ENCODE measurements at regions of chr12 and their contacts with region 1.

Region 1: GRCh38 chr12:120580787-120581723 is at the start of gene POP5:
- DNase-seq: peak; percentile 96 to 97
- H3K4me3 ChIP-seq: peak within 1 kb of the TSS; percentile 86
- H3K4me3 Mint-ChIP-seq: peak within 1 kb of the TSS; percentile 99
- H3K27ac Mint-ChIP-seq: peak within 1 kb of the TSS; percentile 96
- H3K4me1 ChIP-seq: no peaks in the 10 kb centered on the region
- H3K4me1 Mint-ChIP-seq: peaks cover 15% of the 10 kb centered on the region
- H3K27me3 ChIP-seq: no peaks in the 10 kb centered on the region
- H3K27me3 Mint-ChIP-seq: no peaks in the 10 kb centered on the region
- CTCF ChIP-seq: no peak
- total RNA-seq, gene POP5: 49.5 and 53.9 TPM in 2 replicates

Region 2: GRCh38 chr12:120421701-120422100 is 159.4 kb before region 1 on chr12:
- CTCF ChIA-PET with region 1: no interaction called
- POLR2A ChIA-PET with region 1: no interaction called
- intact Hi-C with region 1: no loop called
- DNase-seq: no peak
- H3K4me3 ChIP-seq: no peak overlapping the region
- H3K4me3 Mint-ChIP-seq: no peak overlapping the region
- H3K27ac Mint-ChIP-seq: no peak overlapping the region
- H3K4me1 ChIP-seq: no peaks in the 10 kb centered on the region
- H3K4me1 Mint-ChIP-seq: peaks cover 7% of the 10 kb centered on the region
- H3K27me3 ChIP-seq: no peaks in the 10 kb centered on the region
- H3K27me3 Mint-ChIP-seq: no peaks in the 10 kb centered on the region
- CTCF ChIP-seq: no peak

Region 3: GRCh38 chr12:120495723-120496412 is 85.2 kb before region 1 on chr12 and contains the start of gene DYNLL1:
- CTCF ChIA-PET with region 1: interaction called, 3 read pairs
- POLR2A ChIA-PET with region 1: interaction called, 17 read pairs
- intact Hi-C with region 1: no loop called
- DNase-seq: peak; percentile 96 to 98
- H3K4me3 ChIP-seq: peak within 1 kb of the TSS; percentile 80
- H3K4me3 Mint-ChIP-seq: peak within 1 kb of the TSS; percentile 96
- H3K27ac Mint-ChIP-seq: peak within 1 kb of the TSS; percentile 80
- H3K4me1 ChIP-seq: peaks cover 17% of the 10 kb centered on the region
- H3K4me1 Mint-ChIP-seq: peaks cover 19% of the 10 kb centered on the region
- H3K27me3 ChIP-seq: no peaks in the 10 kb centered on the region
- H3K27me3 Mint-ChIP-seq: no peaks in the 10 kb centered on the region
- CTCF ChIP-seq: no peak
- total RNA-seq, gene DYNLL1: 323 and 324 TPM in 2 replicates

Region 4: GRCh38 chr12:120649442-120650232 is 68.6 kb after region 1 on chr12:
- CTCF ChIA-PET with region 1: interaction called, 37 read pairs
- POLR2A ChIA-PET with region 1: interaction called, 3 read pairs
- intact Hi-C with region 1: loop called (anchors 1 kb)
- DNase-seq: no peak
- H3K4me3 ChIP-seq: no peak overlapping the region
- H3K4me3 Mint-ChIP-seq: peak overlapping the region; percentile 59
- H3K27ac Mint-ChIP-seq: no peak overlapping the region
- H3K4me1 ChIP-seq: no peaks in the 10 kb centered on the region
- H3K4me1 Mint-ChIP-seq: peaks cover 6% of the 10 kb centered on the region
- H3K27me3 ChIP-seq: no peaks in the 10 kb centered on the region
- H3K27me3 Mint-ChIP-seq: peaks cover 3% of the 10 kb centered on the region
- CTCF ChIP-seq: no peak

Region 5: GRCh38 chr12:120725659-120726509 is 144.8 kb after region 1 on chr12 and contains the start of gene ACADS:
- CTCF ChIA-PET with region 1: no interaction called
- POLR2A ChIA-PET with region 1: no interaction called
- intact Hi-C with region 1: loop called (anchors 5 kb)
- DNase-seq: peak; percentile 86 to 93
- H3K4me3 ChIP-seq: peak within 1 kb of the TSS; percentile 63
- H3K4me3 Mint-ChIP-seq: peak within 1 kb of the TSS; percentile 72
- H3K27ac Mint-ChIP-seq: peak within 1 kb of the TSS; percentile 26
- H3K4me1 ChIP-seq: no peaks in the 10 kb centered on the region
- H3K4me1 Mint-ChIP-seq: peaks cover 8% of the 10 kb centered on the region
- H3K27me3 ChIP-seq: no peaks in the 10 kb centered on the region
- H3K27me3 Mint-ChIP-seq: no peaks in the 10 kb centered on the region
- CTCF ChIP-seq: no peak
- total RNA-seq, gene ACADS: 12.5 and 13.1 TPM in 2 replicates

Region 6: DNA sequence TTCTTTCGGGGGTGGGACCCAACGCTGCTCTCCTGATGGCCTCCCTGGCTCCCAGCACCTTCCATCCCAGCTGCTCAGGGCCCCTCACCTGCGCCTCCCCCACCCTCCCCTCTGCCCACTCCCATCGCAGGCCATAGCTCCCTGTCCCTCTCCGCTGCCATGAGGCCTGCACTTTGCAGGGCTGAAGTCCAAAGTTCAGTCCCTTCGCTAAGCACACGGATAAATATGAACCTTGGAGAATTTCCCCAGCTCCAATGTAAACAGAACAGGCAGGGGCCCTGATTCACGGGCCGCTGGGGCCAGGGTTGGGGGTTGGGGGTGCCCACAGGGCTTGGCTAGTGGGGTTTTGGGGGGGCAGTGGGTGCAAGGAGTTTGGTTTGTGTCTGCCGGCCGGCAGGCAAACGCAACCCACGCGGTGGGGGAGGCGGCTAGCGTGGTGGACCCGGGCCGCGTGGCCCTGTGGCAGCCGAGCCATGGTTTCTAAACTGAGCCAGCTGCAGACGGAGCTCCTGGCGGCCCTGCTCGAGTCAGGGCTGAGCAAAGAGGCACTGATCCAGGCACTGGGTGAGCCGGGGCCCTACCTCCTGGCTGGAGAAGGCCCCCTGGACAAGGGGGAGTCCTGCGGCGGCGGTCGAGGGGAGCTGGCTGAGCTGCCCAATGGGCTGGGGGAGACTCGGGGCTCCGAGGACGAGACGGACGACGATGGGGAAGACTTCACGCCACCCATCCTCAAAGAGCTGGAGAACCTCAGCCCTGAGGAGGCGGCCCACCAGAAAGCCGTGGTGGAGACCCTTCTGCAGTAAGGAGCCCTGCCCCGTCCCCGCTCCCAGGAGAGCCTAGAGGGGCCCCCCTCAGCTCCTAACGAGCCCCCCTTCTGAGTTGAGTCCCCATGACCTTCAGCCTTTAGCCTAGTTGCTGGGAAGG is 397.5 kb after region 1 on chr12 and contains the start of gene HNF1A:
- CTCF ChIA-PET with region 1: interaction called, 4 read pairs
- POLR2A ChIA-PET with region 1: interaction called, 17 read pairs
- intact Hi-C with region 1: loop called (anchors 2 kb)
- DNase-seq: peak; percentile 83 to 93
- H3K4me3 ChIP-seq: peak within 1 kb of the TSS; percentile 87
- H3K4me3 Mint-ChIP-seq: peak within 1 kb of the TSS; percentile 88
- H3K27ac Mint-ChIP-seq: peak within 1 kb of the TSS; percentile 71
- H3K4me1 ChIP-seq: peaks cover 49% of the 10 kb centered on the region
- H3K4me1 Mint-ChIP-seq: peaks cover 30% of the 10 kb centered on the region
- H3K27me3 ChIP-seq: no peaks in the 10 kb centered on the region
- H3K27me3 Mint-ChIP-seq: no peaks in the 10 kb centered on the region
- CTCF ChIP-seq: no peak
- total RNA-seq, gene HNF1A: 37.1 and 41.2 TPM in 2 replicates

Region 7: DNA sequence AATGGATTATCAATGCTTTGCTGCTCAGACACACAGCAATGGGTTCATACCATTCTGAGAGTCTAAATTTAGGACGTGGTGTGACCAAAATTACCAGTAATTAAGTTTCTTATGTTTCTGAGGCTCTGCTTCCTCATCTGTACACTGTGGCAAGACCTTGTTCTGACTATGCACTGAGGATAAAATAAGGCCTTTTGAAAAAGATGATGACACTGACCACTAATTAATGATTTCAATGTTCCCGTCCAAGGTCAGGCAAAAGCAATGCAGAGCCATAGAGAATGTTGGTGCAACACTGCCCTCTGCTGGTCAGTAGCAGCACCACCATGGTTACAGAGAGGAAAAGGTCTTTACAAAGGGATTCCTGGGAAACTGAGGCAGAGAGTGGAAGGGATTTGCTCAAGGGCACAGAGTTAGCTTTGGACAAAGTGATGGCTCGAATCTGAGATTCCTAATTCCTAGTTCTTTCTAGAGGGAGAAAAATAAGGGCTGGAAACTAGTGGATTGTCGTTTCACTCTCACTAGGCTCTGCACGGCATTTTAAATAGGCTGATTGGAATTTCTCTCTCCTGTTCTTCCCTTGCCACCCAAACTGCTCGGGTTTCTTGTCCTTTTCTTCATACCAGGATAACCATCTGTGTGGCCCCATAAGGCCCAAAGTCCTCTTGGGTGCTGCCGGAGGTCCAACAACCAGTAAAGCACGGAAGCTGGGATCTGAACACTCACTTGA is 529.3 kb after region 1 on chr12:
- CTCF ChIA-PET with region 1: no interaction called
- POLR2A ChIA-PET with region 1: no interaction called
- intact Hi-C with region 1: loop called (anchors 5 kb)
- DNase-seq: peak; percentile 67 to 74
- H3K4me3 ChIP-seq: no peak overlapping the region
- H3K4me3 Mint-ChIP-seq: no peak overlapping the region
- H3K27ac Mint-ChIP-seq: no peak overlapping the region
- H3K4me1 ChIP-seq: no peaks in the 10 kb centered on the region
- H3K4me1 Mint-ChIP-seq: peaks cover 6% of the 10 kb centered on the region
- H3K27me3 ChIP-seq: no peaks in the 10 kb centered on the region
- H3K27me3 Mint-ChIP-seq: no peaks in the 10 kb centered on the region
- CTCF ChIP-seq: peak; percentile 84 to 94